ENCODE measurements at regions of chr14 and their contacts with region 1.

Region 1: DNA sequence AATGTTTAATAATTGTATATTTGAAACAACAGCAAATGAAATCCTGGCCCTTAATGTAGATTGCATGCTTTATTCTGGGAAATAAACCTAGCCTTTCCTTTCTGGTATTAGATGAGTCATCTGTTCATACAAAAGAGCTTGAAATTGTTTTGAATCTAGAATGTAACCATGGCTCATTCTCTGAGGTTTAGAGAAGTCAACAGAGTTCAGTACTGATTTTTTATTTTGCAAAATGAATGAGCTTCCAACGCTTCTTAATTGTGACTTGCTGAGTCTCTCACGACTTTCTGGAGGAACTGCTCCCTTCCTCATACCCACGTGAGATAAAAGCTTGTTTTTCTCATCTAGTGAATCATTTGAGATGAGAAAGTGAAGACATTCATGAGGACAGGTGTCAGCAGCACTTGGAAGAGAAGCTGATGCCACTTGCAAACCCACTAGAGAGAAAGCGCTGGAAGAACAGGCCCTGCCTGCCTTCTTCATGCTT is 509.6 kb downstream of the VRK1 start:
- DNase-seq: peak; percentile 39
- H3K4me3 Mint-ChIP-seq: no peak overlapping the region
- H3K27ac Mint-ChIP-seq: peak overlapping the region; percentile 92
- H3K4me1 Mint-ChIP-seq: peaks cover 29% of the 10 kb centered on the region
- H3K27me3 Mint-ChIP-seq: no peaks in the 10 kb centered on the region

Region 2: DNA sequence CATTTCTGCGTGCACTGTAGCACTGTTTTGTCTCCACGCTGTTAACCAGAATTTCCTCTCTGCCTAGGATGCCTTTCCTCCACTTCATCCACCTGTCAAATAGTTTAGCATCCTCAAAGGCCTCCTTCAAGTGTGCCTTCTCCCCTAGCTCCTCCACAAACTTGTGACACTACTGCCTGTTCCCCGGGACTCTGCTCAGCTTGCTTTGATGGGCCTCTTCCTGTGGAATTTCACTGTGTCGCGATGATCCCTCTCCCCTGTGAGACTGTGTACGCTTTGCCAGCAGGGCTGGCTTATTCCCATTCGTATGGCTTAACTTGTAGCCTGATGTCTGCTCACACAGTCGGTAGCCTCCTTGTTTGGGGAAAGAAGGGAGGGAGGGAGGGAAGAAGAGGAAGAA is 82.8 kb before region 1 on chr14:
- CTCF ChIA-PET with region 1: no interaction called
- POLR2A ChIA-PET with region 1: no interaction called
- intact Hi-C with region 1: no loop called
- DNase-seq: no peak
- H3K4me3 Mint-ChIP-seq: no peak overlapping the region
- H3K27ac Mint-ChIP-seq: no peak overlapping the region
- H3K4me1 Mint-ChIP-seq: peaks cover 9% of the 10 kb centered on the region
- H3K27me3 Mint-ChIP-seq: peaks cover 20% of the 10 kb centered on the region

Region 3: GRCh38 chr14:97336816-97337215 is 30.0 kb after region 1 on chr14:
- CTCF ChIA-PET with region 1: no interaction called
- POLR2A ChIA-PET with region 1: no interaction called
- intact Hi-C with region 1: no loop called
- DNase-seq: no peak
- H3K4me3 Mint-ChIP-seq: no peak overlapping the region
- H3K27ac Mint-ChIP-seq: no peak overlapping the region
- H3K4me1 Mint-ChIP-seq: peaks cover 18% of the 10 kb centered on the region
- H3K27me3 Mint-ChIP-seq: no peaks in the 10 kb centered on the region

Region 4: GRCh38 chr14:97380539-97380941 is 73.7 kb after region 1 on chr14:
- CTCF ChIA-PET with region 1: no interaction called
- POLR2A ChIA-PET with region 1: interaction called, 4 read pairs
- intact Hi-C with region 1: loop called (anchors 1 kb)
- DNase-seq: peak; percentile 89
- H3K4me3 Mint-ChIP-seq: no peak overlapping the region
- H3K27ac Mint-ChIP-seq: peak overlapping the region; percentile 78
- H3K4me1 Mint-ChIP-seq: peaks cover 59% of the 10 kb centered on the region
- H3K27me3 Mint-ChIP-seq: no peaks in the 10 kb centered on the region

Region 5: DNA sequence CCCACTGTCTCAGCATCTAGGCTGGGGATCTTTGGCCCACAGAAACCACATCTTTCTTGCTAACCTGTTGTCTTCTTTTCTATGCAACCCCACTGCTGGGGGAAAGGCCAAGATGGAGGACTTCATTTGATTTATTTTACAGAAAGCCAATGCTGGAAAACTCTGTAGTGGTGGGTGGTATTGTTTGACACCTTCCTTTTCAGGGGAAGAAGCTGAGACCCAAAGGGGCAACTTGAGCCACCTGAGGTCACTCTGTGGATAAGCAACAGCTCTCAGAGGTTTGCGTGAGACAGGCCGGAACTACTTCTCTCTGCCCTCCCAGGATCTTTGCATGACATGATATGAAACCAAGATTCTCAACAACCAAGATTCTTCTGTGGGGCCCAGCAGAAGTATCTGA is 135.6 kb after region 1 on chr14:
- CTCF ChIA-PET with region 1: no interaction called
- POLR2A ChIA-PET with region 1: interaction called, 3 read pairs
- intact Hi-C with region 1: loop called (anchors 1 kb)
- DNase-seq: peak; percentile 60
- H3K4me3 Mint-ChIP-seq: peak overlapping the region; percentile 21
- H3K27ac Mint-ChIP-seq: peak overlapping the region; percentile 96
- H3K4me1 Mint-ChIP-seq: peaks cover 25% of the 10 kb centered on the region
- H3K27me3 Mint-ChIP-seq: no peaks in the 10 kb centered on the region

Region 6: DNA sequence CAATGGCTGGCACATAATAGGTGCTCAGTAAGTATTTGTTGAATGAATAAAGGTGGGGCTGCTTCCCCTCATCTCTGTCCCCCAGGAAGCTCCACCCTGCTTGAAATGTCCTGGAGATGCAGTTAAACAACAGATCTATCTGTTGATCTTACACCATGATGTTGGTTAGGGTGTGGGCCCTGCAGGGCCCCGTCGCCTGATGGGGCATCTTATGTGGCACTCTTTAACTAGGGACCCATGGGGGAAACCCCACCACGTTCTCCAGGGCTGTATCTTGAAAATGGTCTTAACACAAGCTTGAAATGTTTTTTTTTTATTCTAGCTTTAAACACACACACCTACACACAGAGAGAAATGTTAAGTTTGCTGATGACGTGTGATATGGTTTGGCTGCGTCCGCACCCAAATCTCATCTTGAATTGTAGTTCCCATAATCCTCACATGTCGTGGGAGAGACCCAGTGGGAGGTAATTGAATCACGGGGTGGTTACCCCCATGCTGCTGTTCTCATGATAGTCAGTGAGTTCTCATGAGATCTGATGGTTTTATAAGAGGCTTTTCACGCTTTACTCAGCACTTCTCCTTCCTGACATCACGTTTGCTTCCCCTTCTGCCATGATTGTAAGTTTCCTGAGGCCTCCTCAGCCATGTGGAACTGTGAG is 232.1 kb after region 1 on chr14:
- CTCF ChIA-PET with region 1: no interaction called
- POLR2A ChIA-PET with region 1: no interaction called
- intact Hi-C with region 1: no loop called
- DNase-seq: peak; percentile 25
- H3K4me3 Mint-ChIP-seq: no peak overlapping the region
- H3K27ac Mint-ChIP-seq: no peak overlapping the region
- H3K4me1 Mint-ChIP-seq: peaks cover 19% of the 10 kb centered on the region
- H3K27me3 Mint-ChIP-seq: no peaks in the 10 kb centered on the region

Region 7: GRCh38 chr14:97602438-97603117 is 295.8 kb after region 1 on chr14:
- CTCF ChIA-PET with region 1: no interaction called
- POLR2A ChIA-PET with region 1: no interaction called
- intact Hi-C with region 1: loop called (anchors 5 kb)
- DNase-seq: peak; percentile 80
- H3K4me3 Mint-ChIP-seq: no peak overlapping the region
- H3K27ac Mint-ChIP-seq: no peak overlapping the region
- H3K4me1 Mint-ChIP-seq: peaks cover 29% of the 10 kb centered on the region
- H3K27me3 Mint-ChIP-seq: no peaks in the 10 kb centered on the region

Measured in activated CD4-positive, alpha-beta memory T cell treated with anti-CD3 and anti-CD28 coated beads for 36 hours (primary cell).